ENCODE measurements at regions of chr15 and their contacts with region 1.

Region 1: GRCh38 chr15:89052474-89052873 is 35.8 kb upstream of the ABHD2 start:
- DNase-seq: no peak
- H3K4me3 ChIP-seq: no peak overlapping the region
- H3K27ac ChIP-seq: peak overlapping the region in 1 of 2 donors; percentile 37
- H3K4me1 ChIP-seq: no peaks in the 10 kb centered on the region
- H3K27me3 ChIP-seq: no peaks in the 10 kb centered on the region
- CTCF ChIP-seq: no peak

Region 2: DNA sequence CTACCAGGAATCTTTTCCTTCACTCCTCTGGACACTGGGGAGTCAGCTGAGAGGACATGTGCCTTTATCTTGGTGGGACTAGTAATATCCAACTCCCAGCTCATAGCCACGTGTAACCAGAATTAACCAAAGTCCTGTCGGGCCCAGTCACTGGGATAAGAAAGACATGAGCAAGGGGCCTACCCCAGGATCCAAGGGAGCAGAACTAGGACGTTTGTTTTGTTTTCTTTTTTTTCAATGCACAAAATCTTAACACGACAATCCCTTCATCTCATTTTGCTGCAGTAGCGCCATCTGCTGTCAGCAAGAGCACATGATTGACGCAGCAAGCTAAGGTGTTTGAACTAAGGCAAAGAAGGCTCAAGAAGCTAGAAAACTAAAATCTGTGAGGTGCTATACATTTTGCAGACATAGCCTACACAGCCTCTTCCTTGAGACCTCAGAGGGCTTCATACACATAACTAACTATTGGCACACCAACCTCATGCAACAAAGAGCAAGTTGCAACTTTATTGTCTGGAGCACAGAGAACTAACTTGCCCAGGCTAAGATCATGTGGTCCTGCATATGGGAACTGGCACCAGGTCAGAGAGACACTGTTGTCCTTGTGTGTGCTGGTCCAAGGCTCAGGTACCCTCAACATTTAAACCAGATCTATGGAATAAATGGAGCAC is 125.3 kb after region 1 on chr15:
- intact Hi-C with region 1: loop called (anchors 5 kb)
- DNase-seq: peak in 4 of 5 donors; percentile 67 to 93 (median 79)
- H3K4me3 ChIP-seq: no peak overlapping the region
- H3K27ac ChIP-seq: no peak overlapping the region
- H3K4me1 ChIP-seq: peaks cover 0 to 3% (median 2%) of the 10 kb centered on the region in 3 donors
- H3K27me3 ChIP-seq: no peaks in the 10 kb centered on the region
- CTCF ChIP-seq: peak; percentile 88

Region 3: GRCh38 chr15:89346516-89347231 is 294.2 kb after region 1 on chr15:
- intact Hi-C with region 1: no loop called
- DNase-seq: peak in 1 of 5 donors; percentile 16
- H3K4me3 ChIP-seq: no peak overlapping the region
- H3K27ac ChIP-seq: no peak overlapping the region
- H3K4me1 ChIP-seq: no peaks in the 10 kb centered on the region
- H3K27me3 ChIP-seq: no peaks in the 10 kb centered on the region
- CTCF ChIP-seq: no peak